ENCODE measurements at regions of chr11 and their contacts with region 1.

Region 1: DNA sequence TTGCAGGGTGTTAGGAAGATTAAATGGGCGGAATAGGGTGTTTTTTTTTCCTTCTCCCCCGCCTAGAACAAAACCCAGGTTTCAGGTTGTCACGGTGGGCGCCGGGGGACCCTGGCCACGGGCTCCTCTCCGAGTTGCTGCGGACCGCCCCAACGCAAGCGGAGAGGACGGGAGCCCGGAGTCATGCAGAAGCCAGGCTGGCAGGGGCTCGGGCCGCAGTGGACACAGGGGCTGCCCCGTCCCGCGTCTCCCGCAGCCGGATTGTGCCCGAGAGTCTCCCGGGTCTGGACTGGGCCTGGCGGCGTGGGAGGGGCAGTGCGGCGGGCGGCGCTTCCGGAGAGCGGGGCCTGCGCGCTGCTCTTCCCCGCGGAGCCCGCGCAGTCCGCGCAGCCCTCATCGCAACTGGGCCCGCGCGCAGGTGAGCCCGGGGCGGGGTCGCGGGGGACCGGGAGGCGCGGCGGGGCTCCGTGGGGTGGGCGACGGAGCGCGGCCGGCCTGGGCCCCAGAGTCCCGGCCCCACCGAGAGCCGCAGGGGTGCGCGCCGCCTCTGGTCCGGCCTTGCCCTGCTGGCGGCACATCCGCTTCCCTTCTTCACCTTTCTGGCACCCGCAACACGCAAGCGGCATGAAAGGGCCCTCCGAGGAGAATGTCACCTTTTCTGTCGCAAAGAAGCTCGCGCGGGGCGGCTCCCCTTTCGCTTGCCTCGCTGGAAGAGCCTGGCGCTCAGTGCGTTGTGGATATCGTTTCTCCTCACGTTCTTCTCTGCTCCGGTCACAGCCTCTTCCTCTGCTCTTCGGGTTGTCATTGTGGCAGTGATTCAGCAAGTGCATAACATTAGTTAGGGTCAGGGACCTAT is at the start of gene TIRAP:
- DNase-seq: peak; percentile 30 to 59
- ATAC-seq: peak; percentile 83 to 86
- H3K4me3 ChIP-seq: peak within 1 kb of the TSS; percentile 72 to 88 (median 84)
- H3K27ac ChIP-seq: peak within 1 kb of the TSS; percentile 85 to 95 (median 92)
- H3K4me1 ChIP-seq: peaks cover 11 to 21% of the 10 kb centered on the region in 2 donors
- H3K27me3 ChIP-seq: no peaks in the 10 kb centered on the region
- CTCF ChIP-seq: peak; percentile 27 to 52 (median 39)
- POLR2A ChIP-seq: peak; percentile 39 to 42
- total RNA-seq, gene TIRAP: 4.5 to 5.8 (median 5.6) TPM

Region 2: DNA sequence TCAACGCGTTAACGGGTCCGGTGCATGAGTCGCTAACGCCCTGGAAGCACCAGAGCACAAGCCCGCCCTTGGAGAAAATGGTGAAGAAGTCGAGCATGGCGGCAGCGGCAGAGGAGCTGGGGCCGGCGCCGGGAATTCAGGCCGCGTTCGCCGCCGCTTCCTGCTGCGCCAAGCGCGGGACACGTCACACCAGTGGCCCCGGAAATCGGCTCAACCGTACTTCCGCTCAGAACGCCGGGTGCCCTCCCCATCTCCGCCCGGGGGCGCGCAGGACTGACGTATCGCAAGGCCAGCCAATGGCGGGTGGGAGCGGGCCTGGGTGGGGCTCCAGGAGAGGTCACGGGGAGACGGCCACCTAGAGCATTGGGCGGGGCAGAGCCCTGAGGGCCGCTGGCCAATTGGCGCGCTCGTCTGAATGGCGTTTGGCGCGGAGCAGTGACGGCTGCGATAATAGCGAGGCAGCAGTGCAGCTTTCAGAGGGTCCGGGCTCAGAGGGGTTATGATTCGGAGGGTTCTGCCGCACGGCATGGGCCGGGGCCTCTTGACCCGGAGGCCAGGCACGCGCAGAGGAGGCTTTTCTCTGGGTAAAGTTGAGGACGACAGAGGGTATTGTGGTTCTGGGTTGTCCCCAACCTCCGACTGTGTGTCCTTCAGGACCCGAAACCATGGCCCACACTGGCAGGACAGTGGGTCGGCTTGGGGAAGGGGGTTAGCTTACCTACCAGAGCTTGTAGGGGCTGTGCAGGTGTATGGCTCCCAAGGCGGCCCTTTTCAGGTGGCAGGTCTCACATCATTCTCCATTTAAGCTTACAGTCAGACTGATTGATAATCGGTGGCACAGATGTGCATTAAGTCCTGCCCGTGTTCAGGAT is 14.0 kb before region 1 on chr11 and contains the starts of genes FOXRED1 and SRPRA:
- in situ Hi-C with region 1: no loop called
- intact Hi-C with region 1: loop called (anchors 1 kb)
- DNase-seq: peak; percentile 99 to 100
- ATAC-seq: peak; percentile 91 to 94
- H3K4me3 ChIP-seq: peak within 1 kb of the TSS; percentile 82 to 99 (median 88)
- H3K27ac ChIP-seq: peak within 1 kb of the TSS; percentile 87 to 96 (median 91)
- H3K4me1 ChIP-seq: peaks cover 22% of the 10 kb centered on the region in 2 donors
- H3K27me3 ChIP-seq: no peaks in the 10 kb centered on the region
- CTCF ChIP-seq: peak in 1 of 5 experiments; percentile 8
- POLR2A ChIP-seq: peak; percentile 76 to 86
- total RNA-seq, gene FOXRED1: 12.5 to 20.8 (median 16.2) TPM
- total RNA-seq, gene SRPRA: 72.3 to 101 (median 79.4) TPM

Region 3: GRCh38 chr11:126303623-126304456 is 20.9 kb after region 1 on chr11 and contains the start of gene DCPS:
- in situ Hi-C with region 1: no loop called
- intact Hi-C with region 1: loop called (anchors 1 kb)
- DNase-seq: peak; percentile 77 to 89
- ATAC-seq: peak; percentile 88 to 95
- H3K4me3 ChIP-seq: peak within 1 kb of the TSS; percentile 61 to 89 (median 76)
- H3K27ac ChIP-seq: peak within 1 kb of the TSS; percentile 85 to 96 (median 90)
- H3K4me1 ChIP-seq: peaks cover 14 to 34% of the 10 kb centered on the region in 2 donors
- H3K27me3 ChIP-seq: no peaks in the 10 kb centered on the region
- CTCF ChIP-seq: no peak
- POLR2A ChIP-seq: peak; percentile 23 to 31
- total RNA-seq, gene DCPS: 9.8 to 23.1 (median 11.5) TPM

Region 4: GRCh38 chr11:126366065-126366785 is 83.3 kb after region 1 on chr11:
- in situ Hi-C with region 1: no loop called
- intact Hi-C with region 1: no loop called
- DNase-seq: no peak
- ATAC-seq: no peak
- H3K4me3 ChIP-seq: no peak overlapping the region
- H3K27ac ChIP-seq: no peak overlapping the region
- H3K4me1 ChIP-seq: peaks cover 0 to 3% of the 10 kb centered on the region in 2 donors
- H3K27me3 ChIP-seq: no peaks in the 10 kb centered on the region
- CTCF ChIP-seq: no peak
- POLR2A ChIP-seq: no peak

Region 5: GRCh38 chr11:126496576-126497337 is 213.8 kb after region 1 on chr11:
- in situ Hi-C with region 1: no loop called
- intact Hi-C with region 1: no loop called
- DNase-seq: no peak
- ATAC-seq: no peak
- H3K4me3 ChIP-seq: no peak overlapping the region
- H3K27ac ChIP-seq: no peak overlapping the region
- H3K4me1 ChIP-seq: no peaks in the 10 kb centered on the region
- H3K27me3 ChIP-seq: peaks cover 5 to 20% (median 7%) of the 10 kb centered on the region in 3 donors
- CTCF ChIP-seq: no peak
- POLR2A ChIP-seq: no peak